ENCODE measurements at regions of chr5 and their contacts with region 1.

Region 1: GRCh38 chr5:79109527-79110492 is 1.8 kb upstream of the BHMT start:
- DNase-seq: no peak
- ATAC-seq: no peak
- H3K4me3 ChIP-seq: no peak overlapping the region
- H3K27ac ChIP-seq: no peak overlapping the region
- H3K4me1 ChIP-seq: no peaks in the 10 kb centered on the region
- H3K27me3 ChIP-seq: peaks cover 22 to 36% (median 33%) of the 10 kb centered on the region in 3 donors
- CTCF ChIP-seq: peak in 3 of 5 experiments; percentile 16 to 47 (median 24)
- POLR2A ChIP-seq: no peak

Region 2: DNA sequence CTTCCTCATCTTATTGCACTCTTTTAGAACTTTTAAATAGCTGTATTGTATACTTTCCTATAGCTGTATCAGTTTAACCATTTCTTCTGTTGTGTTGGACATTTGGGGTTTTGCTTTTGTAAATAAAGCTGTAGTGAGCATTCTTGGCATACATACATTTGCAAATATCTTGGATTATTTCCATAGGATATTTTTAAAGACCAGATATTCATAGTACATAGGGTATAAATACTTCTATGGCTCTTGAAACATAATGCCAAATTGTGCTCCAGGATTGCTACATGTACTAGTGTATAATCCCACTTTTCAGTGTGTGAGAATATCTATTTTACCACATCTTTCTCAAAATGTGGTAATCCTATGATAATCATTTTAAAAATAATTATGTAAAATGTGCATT is 698.2 kb before region 1 on chr5:
- in situ Hi-C with region 1: no loop called
- intact Hi-C with region 1: no loop called
- DNase-seq: no peak
- ATAC-seq: no peak
- H3K4me3 ChIP-seq: no peak overlapping the region
- H3K27ac ChIP-seq: no peak overlapping the region
- H3K4me1 ChIP-seq: peaks cover 18 to 25% of the 10 kb centered on the region in 2 donors
- H3K27me3 ChIP-seq: no peaks in the 10 kb centered on the region
- CTCF ChIP-seq: no peak
- POLR2A ChIP-seq: no peak

Region 3: DNA sequence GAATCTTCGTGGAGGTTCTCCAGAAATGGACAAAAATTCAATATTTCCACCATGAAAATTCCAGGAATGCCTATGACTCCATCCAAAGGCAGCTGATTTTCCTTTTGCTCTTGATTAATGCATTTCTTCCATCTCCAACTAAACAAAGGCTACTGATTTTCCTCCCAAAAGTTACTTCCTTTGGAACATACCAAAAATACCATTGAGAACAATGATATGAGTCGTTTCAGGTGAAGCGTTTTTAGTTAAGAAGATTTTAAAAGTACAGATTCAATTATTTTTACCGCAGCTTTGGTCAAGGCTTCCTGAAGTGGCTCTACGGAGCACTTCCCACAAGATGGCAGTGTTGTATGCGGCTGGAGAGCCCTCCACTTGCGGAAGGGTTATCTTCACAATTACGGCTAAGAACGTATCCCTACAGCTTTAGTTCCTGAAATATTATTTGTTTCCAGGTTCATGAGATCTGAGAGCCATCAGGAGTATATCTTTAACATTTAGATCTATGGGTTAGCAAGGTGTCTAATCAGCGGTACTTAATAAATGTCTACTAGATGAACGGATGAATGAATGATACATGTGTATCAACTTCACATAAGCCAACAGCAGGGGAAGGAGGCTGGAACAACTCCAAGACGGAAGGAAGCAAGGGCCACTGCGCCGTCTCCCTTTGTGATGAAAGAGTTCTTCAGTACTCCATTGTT is 88.8 kb before region 1 on chr5:
- in situ Hi-C with region 1: no loop called
- intact Hi-C with region 1: loop called (anchors 2 kb)
- DNase-seq: peak; percentile 30 to 33
- ATAC-seq: peak; percentile 72 to 85
- H3K4me3 ChIP-seq: peak overlapping the region in 2 of 4 donors; percentile 6 to 7
- H3K27ac ChIP-seq: no peak overlapping the region
- H3K4me1 ChIP-seq: peaks cover 0 to 3% of the 10 kb centered on the region in 2 donors
- H3K27me3 ChIP-seq: no peaks in the 10 kb centered on the region
- CTCF ChIP-seq: peak in 4 of 5 experiments; percentile 57 to 79 (median 65)
- POLR2A ChIP-seq: no peak

Region 4: GRCh38 chr5:79030663-79031484 is 78.9 kb before region 1 on chr5:
- in situ Hi-C with region 1: loop called in 1 of 4 experiments (anchors 10 kb)
- intact Hi-C with region 1: no loop called
- DNase-seq: no peak
- ATAC-seq: no peak
- H3K4me3 ChIP-seq: no peak overlapping the region
- H3K27ac ChIP-seq: no peak overlapping the region
- H3K4me1 ChIP-seq: no peaks in the 10 kb centered on the region
- H3K27me3 ChIP-seq: no peaks in the 10 kb centered on the region
- CTCF ChIP-seq: no peak
- POLR2A ChIP-seq: no peak